MCF 10A (cell line): ENCODE measurements at regions of chr3 and their contacts with region 1.

Region 1: GRCh38 chr3:177827511-177828207 is 630.4 kb upstream of the TBL1XR1 start:
- DNase-seq: peak; percentile 88
- H3K4me3 Mint-ChIP-seq: peak overlapping the region; percentile 75
- H3K27ac Mint-ChIP-seq: peak overlapping the region; percentile 89
- H3K4me1 Mint-ChIP-seq: peaks cover 51% of the 10 kb centered on the region
- H3K27me3 Mint-ChIP-seq: no peaks in the 10 kb centered on the region
- CTCF ChIP-seq: no peak

Region 2: GRCh38 chr3:177694316-177694715 is 133.3 kb before region 1 on chr3:
- CTCF ChIA-PET with region 1: no interaction called
- POLR2A ChIA-PET with region 1: no interaction called
- intact Hi-C with region 1: no loop called
- DNase-seq: no peak
- H3K4me3 Mint-ChIP-seq: no peak overlapping the region
- H3K27ac Mint-ChIP-seq: no peak overlapping the region
- H3K4me1 Mint-ChIP-seq: no peaks in the 10 kb centered on the region
- H3K27me3 Mint-ChIP-seq: no peaks in the 10 kb centered on the region
- CTCF ChIP-seq: no peak

Region 3: DNA sequence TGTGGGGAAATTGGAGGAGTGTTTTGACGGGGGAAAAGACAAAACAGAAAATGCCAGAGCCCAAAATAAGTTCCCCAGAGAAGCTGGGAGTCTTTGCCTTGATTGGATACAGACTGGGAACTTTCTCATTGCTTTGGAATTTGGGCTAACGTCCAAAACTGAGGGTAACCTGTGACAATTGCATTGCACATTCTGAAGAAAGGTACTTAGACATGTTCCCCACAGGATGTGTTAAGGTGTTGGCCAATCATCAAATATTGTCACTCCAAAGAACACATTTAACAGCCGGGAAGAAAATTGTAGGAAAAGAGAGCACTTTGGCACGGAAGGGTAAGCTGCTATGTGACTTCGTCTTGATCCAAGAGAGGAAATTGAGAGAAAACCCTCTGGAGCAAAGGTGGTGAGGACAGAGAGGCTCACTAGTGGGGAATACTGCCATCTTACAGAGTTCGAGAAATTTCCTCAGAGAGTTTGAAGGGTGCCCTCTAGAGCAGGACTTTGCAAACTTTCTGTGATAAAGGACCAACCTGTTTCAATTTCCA is 10.9 kb before region 1 on chr3:
- CTCF ChIA-PET with region 1: interaction called, 8 read pairs
- POLR2A ChIA-PET with region 1: interaction called, 34 read pairs
- intact Hi-C with region 1: no loop called
- DNase-seq: peak; percentile 98
- H3K4me3 Mint-ChIP-seq: peak overlapping the region; percentile 48
- H3K27ac Mint-ChIP-seq: peak overlapping the region; percentile 89
- H3K4me1 Mint-ChIP-seq: peaks cover 40% of the 10 kb centered on the region
- H3K27me3 Mint-ChIP-seq: no peaks in the 10 kb centered on the region
- CTCF ChIP-seq: peak; percentile 34

Region 4: DNA sequence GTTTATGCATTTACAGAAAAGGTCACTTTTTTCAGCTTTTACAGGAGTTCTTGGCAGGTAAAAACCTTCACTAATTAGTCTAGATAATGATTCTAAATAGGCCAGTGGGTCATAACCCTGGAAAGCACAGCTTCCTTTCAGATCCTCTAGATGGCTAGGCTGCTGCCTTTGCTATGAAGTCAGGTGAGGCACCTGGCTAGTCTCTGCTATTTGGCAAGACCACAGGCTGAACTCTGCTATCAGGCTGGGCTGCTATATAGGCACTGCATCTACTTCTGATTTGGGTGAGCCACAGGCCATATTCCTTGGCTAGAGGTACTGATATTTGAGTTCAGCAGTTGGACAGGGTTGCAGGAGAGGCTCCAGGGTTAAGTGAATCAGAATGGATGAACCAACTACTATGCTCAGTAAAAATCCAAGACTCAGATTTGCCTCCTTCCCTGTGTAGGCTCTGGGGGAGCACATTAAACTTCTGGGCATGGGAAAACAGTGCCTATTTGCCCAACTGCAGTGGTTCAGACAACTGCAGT is 35.4 kb after region 1 on chr3:
- CTCF ChIA-PET with region 1: no interaction called
- POLR2A ChIA-PET with region 1: no interaction called
- intact Hi-C with region 1: no loop called
- DNase-seq: no peak
- H3K4me3 Mint-ChIP-seq: no peak overlapping the region
- H3K27ac Mint-ChIP-seq: no peak overlapping the region
- H3K4me1 Mint-ChIP-seq: no peaks in the 10 kb centered on the region
- H3K27me3 Mint-ChIP-seq: no peaks in the 10 kb centered on the region
- CTCF ChIP-seq: no peak